Activated CD8-positive, alpha-beta T cell treated with anti-CD3 and anti-CD28 coated beads, Interleukin-2, amount 10 ng/mL, durations not matched to agents 7 days and 5 days (primary cell): ENCODE measurements at regions of chr17 and their contacts with region 1.

Region 1: DNA sequence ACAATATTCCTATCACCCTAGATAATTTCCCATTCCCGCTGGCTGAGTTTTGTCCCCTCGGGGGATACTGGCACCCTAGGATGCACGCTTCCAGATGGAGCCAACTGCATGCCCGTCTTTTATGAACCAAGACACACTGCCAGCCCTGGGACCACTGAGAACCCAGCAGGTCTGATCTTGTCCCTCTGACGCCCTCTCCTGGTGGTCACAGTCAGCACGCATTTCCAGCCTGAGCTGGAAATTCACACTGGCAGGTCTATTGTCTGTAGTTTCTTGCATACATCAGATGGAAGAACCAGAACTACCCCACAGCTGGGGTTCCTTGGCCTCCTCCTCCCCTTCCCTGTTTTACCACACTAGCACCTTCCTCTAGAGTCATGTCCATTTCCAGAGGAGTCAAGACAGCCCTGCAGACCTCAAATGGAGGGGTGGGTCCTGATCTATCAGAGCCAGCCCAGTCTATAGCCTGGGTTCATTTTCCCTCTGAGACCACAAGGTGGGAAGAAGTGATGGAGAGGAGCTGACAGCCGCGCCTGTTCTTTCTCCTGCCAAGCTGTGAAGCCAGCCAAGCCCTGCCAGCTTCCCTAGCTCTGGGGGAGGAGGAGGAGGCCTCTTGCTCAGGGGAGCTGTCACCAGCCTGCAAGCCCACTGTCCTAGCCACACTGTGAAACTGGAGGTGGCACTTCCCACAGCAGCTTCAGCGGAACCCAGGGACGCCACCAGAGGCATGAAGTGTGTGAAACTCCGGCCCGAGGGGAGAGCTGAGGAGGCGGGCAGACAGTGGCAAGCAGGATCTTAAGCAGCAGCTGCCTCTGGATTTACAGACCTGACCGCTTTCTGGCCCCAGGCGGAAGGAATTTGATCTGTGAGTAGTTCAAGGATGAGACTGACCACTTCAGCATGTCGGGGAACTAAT is 29.3 kb downstream of the MXRA7 start:
- DNase-seq: peak; percentile 86
- ATAC-seq: peak; percentile 66
- H3K4me3 Mint-ChIP-seq: no peak overlapping the region
- H3K27ac Mint-ChIP-seq: no peak overlapping the region
- H3K4me1 Mint-ChIP-seq: peaks cover 10% of the 10 kb centered on the region
- H3K27me3 Mint-ChIP-seq: peaks cover 2% of the 10 kb centered on the region

Region 2: GRCh38 chr17:76523084-76524037 is 158.1 kb before region 1 on chr17:
- CTCF ChIA-PET with region 1: interaction called, 52 read pairs
- POLR2A ChIA-PET with region 1: no interaction called
- DNase-seq: peak; percentile 86
- ATAC-seq: peak; percentile 88
- H3K4me3 Mint-ChIP-seq: peak overlapping the region; percentile 51
- H3K27ac Mint-ChIP-seq: peak overlapping the region; percentile 65
- H3K4me1 Mint-ChIP-seq: peaks cover 28% of the 10 kb centered on the region
- H3K27me3 Mint-ChIP-seq: no peaks in the 10 kb centered on the region

Region 3: DNA sequence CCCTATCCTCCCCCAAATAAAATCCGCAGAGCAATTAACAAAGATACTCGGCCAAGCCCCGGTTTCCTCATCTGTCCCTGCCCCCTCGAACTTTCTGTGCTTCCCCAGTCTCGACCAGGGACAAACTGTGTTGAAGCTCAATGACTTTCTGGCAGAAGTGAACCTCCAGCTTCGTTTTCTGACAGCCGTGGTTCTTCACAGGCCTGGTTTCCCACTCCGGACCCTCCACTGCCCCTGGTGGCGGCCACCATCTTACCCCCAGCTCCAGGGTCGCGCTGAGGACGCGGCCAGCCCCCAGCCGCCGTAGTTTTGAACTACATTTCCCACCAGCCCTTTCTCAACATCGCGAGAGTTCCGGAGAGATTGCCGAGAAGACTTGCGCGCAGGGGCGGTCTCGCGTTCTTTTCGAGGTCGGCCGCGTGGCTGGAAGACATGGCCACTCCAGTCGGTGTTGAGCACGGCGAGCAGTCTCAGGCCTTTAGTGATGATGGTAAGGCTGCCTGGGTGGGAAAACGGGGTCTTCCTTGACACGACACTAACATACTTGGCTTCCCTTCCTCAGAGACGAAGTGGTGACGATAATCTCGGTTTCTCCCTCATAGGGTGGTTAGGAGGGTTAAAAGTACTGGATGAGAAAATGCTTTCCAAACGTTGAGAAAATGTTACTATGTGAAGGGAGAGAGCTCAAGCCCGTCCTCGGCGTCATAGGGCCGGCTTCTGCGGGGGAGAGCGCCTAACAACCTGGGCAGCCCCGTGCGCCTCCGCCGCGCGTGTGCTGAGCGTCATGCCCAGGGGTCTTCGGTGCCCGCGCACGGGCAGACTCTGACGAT is 123.9 kb before region 1 on chr17:
- CTCF ChIA-PET with region 1: interaction called, 52 read pairs
- POLR2A ChIA-PET with region 1: interaction called, 5 read pairs
- DNase-seq: peak; percentile 97
- ATAC-seq: peak; percentile 94
- H3K4me3 Mint-ChIP-seq: peak overlapping the region; percentile 100
- H3K27ac Mint-ChIP-seq: peak overlapping the region; percentile 99
- H3K4me1 Mint-ChIP-seq: peaks cover 55% of the 10 kb centered on the region
- H3K27me3 Mint-ChIP-seq: no peaks in the 10 kb centered on the region

Region 4: GRCh38 chr17:76671123-76671911 is 10.2 kb before region 1 on chr17:
- CTCF ChIA-PET with region 1: interaction called, 44 read pairs
- POLR2A ChIA-PET with region 1: interaction called, 13 read pairs
- DNase-seq: peak; percentile 100
- ATAC-seq: peak; percentile 99
- H3K4me3 Mint-ChIP-seq: peak overlapping the region; percentile 89
- H3K27ac Mint-ChIP-seq: peak overlapping the region; percentile 95
- H3K4me1 Mint-ChIP-seq: peaks cover 41% of the 10 kb centered on the region
- H3K27me3 Mint-ChIP-seq: peaks cover 5% of the 10 kb centered on the region

Region 5: DNA sequence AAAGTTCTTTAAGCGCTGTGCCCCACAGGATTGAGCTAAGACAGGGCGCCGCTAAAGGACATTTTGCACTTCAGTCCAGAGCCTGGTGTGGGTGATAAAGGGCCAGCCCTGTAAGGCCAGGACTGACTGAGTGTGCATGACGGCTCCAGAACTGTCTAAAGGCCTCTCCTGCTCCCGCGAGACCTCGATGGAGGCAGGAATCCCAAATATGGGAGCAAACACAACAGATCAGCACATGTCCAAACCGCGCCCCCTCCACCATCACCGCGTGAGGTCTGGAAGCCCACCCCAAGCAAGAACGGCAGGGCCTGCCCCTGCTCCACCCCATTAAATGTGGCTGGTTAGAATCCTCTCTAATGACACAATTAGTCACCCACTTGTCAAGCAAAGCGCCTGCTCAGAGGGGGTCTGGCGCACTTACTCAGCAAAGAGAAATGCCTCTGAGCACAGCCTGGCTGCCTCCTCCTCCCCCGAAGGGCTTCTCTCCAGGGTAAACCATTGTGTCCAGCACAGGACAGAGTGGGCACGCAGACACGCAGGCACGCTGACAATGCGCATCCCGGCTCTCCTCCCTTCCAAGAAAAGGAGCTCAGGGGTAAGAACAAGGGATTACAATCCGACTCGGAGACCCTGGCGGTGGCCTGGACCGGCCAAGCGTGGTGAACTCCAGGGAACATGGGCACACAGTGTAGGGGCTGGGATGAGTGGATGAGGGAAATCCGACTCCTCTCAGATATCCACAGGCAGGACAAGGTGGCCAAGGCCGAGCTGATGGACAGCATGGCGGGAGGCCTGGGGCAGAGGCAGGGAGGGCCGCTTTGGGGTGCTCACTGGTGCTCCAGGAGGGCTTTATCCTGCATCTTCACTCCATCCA is 27.8 kb after region 1 on chr17:
- CTCF ChIA-PET with region 1: interaction called, 19 read pairs
- POLR2A ChIA-PET with region 1: interaction called, 5 read pairs
- DNase-seq: no peak
- ATAC-seq: no peak
- H3K4me3 Mint-ChIP-seq: peak overlapping the region; percentile 64
- H3K27ac Mint-ChIP-seq: no peak overlapping the region
- H3K4me1 Mint-ChIP-seq: peaks cover 33% of the 10 kb centered on the region
- H3K27me3 Mint-ChIP-seq: peaks cover 5% of the 10 kb centered on the region

Region 6: DNA sequence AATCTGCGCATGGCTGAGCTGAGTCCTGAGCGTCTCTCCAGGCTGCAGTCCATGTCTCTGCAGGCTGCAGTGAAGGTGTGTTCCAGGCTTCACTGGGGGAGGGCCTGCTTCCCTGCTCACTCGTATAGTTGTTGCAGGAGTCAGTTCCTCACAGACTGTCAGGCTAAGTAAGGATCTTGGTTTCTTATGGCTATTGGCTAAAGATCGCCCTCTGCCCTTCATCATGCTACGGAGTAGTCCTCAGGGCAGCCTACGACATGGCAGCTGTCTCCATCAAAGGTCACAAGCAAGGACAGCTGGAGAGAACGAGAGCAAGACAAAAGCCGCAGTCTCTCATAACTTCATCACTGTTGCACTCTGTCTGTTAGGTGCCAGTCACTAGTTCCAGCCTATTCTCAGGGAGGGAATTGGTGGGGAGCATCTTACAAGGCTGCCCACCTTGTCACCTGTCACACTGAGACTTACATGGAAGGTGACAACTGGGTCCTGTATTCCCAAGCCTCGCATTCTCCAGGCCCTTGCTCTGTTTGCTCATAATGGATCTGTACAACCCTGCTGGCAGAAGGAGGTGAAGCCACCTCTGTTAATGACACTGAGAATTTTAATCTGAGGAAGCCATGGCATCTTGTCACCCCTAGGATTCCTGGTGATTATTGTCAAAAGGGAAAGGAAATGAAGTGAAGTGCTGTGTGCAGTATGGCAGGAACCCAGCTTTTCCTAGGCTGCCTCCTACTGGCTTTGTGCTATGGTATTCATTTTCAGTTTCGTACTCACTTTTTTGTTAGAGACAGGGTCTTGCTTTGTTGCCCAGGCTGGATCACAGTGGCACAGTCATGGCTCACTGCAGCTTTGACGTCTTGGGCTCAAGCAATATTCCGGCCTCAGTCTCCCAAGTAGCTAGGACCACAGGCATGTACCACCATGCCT is 99.8 kb after region 1 on chr17:
- CTCF ChIA-PET with region 1: no interaction called
- POLR2A ChIA-PET with region 1: no interaction called
- DNase-seq: no peak
- ATAC-seq: peak; percentile 36
- H3K4me3 Mint-ChIP-seq: no peak overlapping the region
- H3K27ac Mint-ChIP-seq: no peak overlapping the region
- H3K4me1 Mint-ChIP-seq: no peaks in the 10 kb centered on the region
- H3K27me3 Mint-ChIP-seq: no peaks in the 10 kb centered on the region